Tibial artery (tissue), 4 donors: ENCODE measurements at regions of chr17 and their contacts with region 1.

Region 1: DNA sequence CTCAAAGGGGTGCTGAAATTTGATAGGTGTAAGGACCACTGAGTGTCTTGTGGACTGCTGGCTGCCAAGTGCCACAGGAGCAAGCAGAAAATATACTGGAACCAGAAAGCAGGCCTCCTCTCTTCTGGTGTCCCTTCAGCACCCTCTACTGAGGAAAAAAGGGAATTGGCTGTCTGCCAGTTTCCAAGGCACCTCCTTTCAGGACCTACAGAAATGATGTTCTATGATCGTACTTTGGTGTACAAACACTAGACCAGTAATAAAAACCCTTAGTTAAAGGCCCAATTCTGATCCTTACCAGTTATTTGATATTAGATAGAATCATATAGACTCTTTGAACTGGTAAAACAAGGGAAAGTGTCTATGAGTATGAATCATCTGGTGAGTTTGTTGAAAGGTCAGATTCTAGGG is 35.8 kb upstream of the BCAS3 start:
- DNase-seq: peak; percentile 42 to 74
- H3K4me3 ChIP-seq: no peak overlapping the region
- H3K27ac ChIP-seq: no peak overlapping the region
- H3K4me1 ChIP-seq: peaks cover 0 to 3% (median 0%) of the 10 kb centered on the region in 4 donors
- H3K27me3 ChIP-seq: no peaks in the 10 kb centered on the region
- CTCF ChIP-seq: peak; percentile 33 to 47

Region 2: GRCh38 chr17:60577147-60577915 is 64.5 kb before region 1 on chr17:
- intact Hi-C with region 1: loop called (anchors 5 kb)
- DNase-seq: peak in 1 of 2 donors; percentile 48
- H3K4me3 ChIP-seq: peak overlapping the region; percentile 41 to 48
- H3K27ac ChIP-seq: peak overlapping the region; percentile 55 to 71
- H3K4me1 ChIP-seq: peaks cover 0 to 12% (median 0%) of the 10 kb centered on the region in 4 donors
- H3K27me3 ChIP-seq: no peaks in the 10 kb centered on the region
- CTCF ChIP-seq: peak; percentile 18 to 44

Region 3: GRCh38 chr17:60685437-60685836 is 43.6 kb after region 1 on chr17:
- intact Hi-C with region 1: no loop called
- DNase-seq: no peak
- H3K4me3 ChIP-seq: no peak overlapping the region
- H3K27ac ChIP-seq: no peak overlapping the region
- H3K4me1 ChIP-seq: no peaks in the 10 kb centered on the region
- H3K27me3 ChIP-seq: no peaks in the 10 kb centered on the region
- CTCF ChIP-seq: no peak

Region 4: GRCh38 chr17:60766778-60767190 is 125.0 kb after region 1 on chr17:
- intact Hi-C with region 1: no loop called
- DNase-seq: no peak
- H3K4me3 ChIP-seq: no peak overlapping the region
- H3K27ac ChIP-seq: no peak overlapping the region
- H3K4me1 ChIP-seq: no peaks in the 10 kb centered on the region
- H3K27me3 ChIP-seq: no peaks in the 10 kb centered on the region
- CTCF ChIP-seq: no peak